ENCODE measurements at regions of chr3 and their contacts with region 1.

Region 1: DNA sequence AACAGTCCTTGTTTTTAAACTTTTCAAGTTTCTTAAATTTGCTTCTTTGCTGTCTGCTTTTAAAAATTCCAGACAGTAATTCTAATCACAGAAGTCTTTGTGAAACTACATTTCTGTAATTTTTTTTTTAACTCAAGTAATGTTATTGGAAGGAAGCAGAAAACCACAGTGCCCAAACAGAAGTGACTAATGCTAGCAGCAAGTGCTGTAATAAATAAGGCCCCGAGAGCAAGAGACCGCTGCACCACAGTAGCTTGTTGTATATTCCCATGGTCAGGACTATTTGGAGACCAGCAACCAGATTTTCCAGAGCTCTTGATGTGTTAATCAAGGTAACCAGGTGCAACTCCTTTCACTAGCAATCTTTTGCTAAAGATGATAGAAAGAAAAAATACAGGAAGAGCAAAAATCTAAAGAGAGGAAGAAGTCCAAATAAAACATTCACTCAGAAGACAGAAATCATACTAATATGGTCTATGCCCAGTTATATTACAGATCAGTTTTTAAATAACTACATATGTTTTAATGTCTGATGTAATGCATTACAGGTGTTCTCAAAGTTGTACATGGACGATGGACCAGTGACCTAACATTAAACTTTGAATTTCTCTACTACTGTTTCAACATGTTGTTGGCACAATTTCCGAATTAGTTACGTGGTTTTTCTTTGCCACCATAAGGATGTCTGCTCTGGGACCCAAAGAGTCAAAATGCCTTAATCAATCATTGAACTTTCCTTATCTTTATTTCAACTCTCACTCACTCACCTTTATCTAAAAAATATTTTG is 36.4 kb downstream of the WWTR1 start:
- DNase-seq: no peak

Region 2: GRCh38 chr3:149581681-149582370 is 39.6 kb before region 1 on chr3:
- intact Hi-C with region 1: loop called (anchors 5 kb)
- DNase-seq: no peak

Region 3: GRCh38 chr3:149590691-149591441 is 30.5 kb before region 1 on chr3:
- intact Hi-C with region 1: loop called (anchors 1 kb)
- DNase-seq: no peak

Region 4: GRCh38 chr3:149717391-149718056 is 96.1 kb after region 1 on chr3:
- intact Hi-C with region 1: loop called (anchors 5 kb)
- DNase-seq: no peak

Measured in cardiac septum (tissue), 1 donor.